ENCODE measurements at regions of chr15 and their contacts with region 1.

Region 1: DNA sequence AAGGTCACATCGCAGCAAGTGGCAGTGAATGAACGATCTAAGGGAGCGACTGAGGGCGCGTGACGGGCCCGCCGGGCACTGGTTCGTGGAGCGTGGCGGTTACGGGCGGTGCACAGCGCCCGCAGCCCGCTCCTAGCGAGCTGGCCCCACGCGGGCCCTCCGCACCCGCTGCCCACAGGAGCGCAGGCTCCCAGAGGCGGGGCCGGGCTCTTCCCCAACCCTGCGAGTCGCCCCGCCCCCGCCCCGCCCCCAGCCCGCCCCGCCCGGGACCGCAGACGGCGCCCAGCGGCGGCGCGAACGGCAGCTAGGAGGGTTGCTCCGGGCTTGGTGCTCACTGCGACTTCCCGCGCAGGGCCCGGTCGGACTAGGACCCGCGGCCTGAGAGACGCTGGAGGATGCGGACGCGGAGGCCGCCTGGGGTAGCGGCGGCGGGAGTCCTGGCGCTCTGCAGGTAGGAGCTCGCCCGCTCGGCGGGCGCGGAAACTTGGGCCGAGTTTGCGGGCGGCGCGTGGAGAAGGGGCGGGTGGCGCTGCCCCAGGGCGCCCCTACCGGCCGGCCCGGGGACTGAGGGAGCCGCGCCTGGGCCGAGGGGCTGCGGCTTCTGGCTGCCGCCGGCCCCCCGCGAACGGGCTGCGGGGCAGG is at the start of gene C15orf39:
- DNase-seq: peak; percentile 83
- ATAC-seq: peak; percentile 68
- total RNA-seq, gene C15orf39: 25.5 TPM

Region 2: DNA sequence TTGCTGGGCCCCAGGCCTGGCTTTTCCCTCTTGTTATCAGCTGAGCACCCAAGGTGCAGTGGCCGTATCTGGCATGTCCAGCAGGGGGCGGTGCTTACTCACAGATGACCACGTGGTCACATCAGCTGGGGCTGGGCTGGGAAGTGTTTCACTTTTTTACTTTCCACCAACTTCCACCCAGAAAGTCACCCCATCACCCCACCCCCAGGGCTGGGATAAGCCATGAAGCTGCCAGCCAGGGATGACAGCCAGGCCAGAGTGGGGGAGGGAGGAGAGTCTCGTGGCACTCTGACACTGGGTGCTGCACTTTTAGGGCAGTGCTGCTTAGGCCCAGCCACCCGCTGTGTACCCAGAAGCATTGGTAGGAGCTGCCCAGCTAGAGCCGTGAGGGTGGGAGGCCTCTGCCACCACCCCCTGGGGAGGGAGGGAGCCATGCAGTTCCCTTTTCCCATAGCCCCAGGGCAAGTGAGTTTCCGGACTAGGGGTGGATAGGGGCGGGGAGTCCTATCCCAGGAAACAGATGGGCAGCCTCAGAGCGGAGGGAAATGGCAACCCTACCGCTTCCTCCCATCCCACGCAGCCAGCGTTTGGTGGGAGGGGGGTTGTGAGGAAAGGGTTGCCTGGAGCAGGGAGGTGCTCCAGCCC is 172.2 kb before region 1 on chr15:
- intact Hi-C with region 1: loop called (anchors 2 kb)
- DNase-seq: peak; percentile 98
- ATAC-seq: peak; percentile 92

Region 3: GRCh38 chr15:75042730-75043508 is 158.8 kb before region 1 on chr15:
- intact Hi-C with region 1: loop called (anchors 5 kb)
- DNase-seq: peak; percentile 83
- ATAC-seq: peak; percentile 44